ENCODE measurements at regions of chr12 and their contacts with region 1.

Region 1: GRCh38 chr12:103924761-103925641 is 5.2 kb upstream of the HSP90B1 start:
- DNase-seq: peak; percentile 80
- H3K4me3 Mint-ChIP-seq: peak overlapping the region; percentile 78
- H3K27ac Mint-ChIP-seq: peak overlapping the region; percentile 94
- H3K4me1 Mint-ChIP-seq: peaks cover 39% of the 10 kb centered on the region
- H3K27me3 Mint-ChIP-seq: no peaks in the 10 kb centered on the region

Region 2: DNA sequence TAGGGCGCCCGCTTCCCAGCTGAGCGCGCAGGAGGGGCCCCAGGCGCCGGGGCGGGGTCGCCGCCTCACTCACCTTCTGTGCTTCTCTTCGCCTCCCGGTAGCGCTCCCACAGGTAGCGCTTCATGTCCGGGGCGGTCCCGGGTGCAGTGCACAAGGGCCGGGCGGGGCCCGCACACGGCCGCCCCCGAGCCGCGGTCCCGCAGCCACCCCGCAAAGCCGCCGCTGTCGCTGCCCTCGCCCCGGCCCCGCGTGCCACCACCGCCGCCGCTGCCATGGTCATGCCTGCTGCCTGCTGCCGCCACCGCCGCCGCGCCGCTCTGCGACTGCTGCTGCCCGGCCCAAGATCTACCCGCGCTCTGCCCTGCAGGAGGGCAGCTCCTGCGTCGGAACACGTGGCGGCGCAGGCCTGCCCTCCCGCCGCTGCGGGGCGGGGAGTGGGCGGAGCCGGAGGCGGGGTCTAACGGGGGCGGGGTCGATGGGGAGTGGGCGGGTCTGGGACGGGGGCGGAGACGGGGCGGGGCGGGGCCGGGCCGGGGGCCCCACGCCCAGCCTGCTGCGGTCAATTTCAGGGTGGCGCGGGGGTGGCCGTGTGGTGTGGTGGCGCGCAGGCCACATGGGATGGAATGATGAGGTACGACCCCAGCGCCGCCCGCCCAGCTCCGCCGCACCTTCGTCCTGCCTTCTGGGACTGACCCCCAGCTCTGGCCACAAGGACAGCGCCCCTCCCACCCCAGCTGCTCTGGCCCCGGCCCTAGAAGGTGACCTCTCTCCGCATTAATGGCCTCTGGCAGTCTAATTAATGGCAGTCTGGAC is 83.9 kb before region 1 on chr12 and contains the start of gene NT5DC3:
- CTCF ChIA-PET with region 1: no interaction called
- POLR2A ChIA-PET with region 1: interaction called, 3 read pairs
- intact Hi-C with region 1: loop called (anchors 1 kb)
- DNase-seq: peak; percentile 89
- H3K4me3 Mint-ChIP-seq: peak within 1 kb of the TSS; percentile 76
- H3K27ac Mint-ChIP-seq: peak within 1 kb of the TSS; percentile 31
- H3K4me1 Mint-ChIP-seq: peaks cover 13% of the 10 kb centered on the region
- H3K27me3 Mint-ChIP-seq: no peaks in the 10 kb centered on the region
- total RNA-seq, gene NT5DC3: 6.8 to 7.5 TPM

Region 3: DNA sequence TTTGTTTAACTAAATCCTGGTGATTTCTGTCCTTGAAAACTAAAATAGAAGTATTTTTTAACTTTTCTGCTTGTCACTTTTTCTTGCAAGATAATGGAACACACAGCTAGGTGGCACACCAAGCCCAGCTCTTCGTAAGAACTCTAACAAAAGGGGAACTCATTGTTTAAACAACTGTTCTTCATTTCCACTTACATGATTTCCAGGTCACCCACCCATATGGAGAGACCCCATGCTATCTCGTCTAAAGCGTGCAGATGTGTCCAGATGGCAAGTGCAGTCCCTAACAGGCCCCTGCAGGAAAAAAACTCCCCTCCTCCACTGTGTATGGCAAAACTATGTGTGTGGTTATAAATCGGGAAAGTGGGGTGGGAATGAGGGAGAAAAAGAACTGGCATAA is 40.7 kb before region 1 on chr12:
- CTCF ChIA-PET with region 1: no interaction called
- POLR2A ChIA-PET with region 1: interaction called, 6 read pairs
- intact Hi-C with region 1: loop called (anchors 1 kb)
- DNase-seq: peak; percentile 57
- H3K4me3 Mint-ChIP-seq: no peak overlapping the region
- H3K27ac Mint-ChIP-seq: no peak overlapping the region
- H3K4me1 Mint-ChIP-seq: peaks cover 16% of the 10 kb centered on the region
- H3K27me3 Mint-ChIP-seq: no peaks in the 10 kb centered on the region

Region 4: DNA sequence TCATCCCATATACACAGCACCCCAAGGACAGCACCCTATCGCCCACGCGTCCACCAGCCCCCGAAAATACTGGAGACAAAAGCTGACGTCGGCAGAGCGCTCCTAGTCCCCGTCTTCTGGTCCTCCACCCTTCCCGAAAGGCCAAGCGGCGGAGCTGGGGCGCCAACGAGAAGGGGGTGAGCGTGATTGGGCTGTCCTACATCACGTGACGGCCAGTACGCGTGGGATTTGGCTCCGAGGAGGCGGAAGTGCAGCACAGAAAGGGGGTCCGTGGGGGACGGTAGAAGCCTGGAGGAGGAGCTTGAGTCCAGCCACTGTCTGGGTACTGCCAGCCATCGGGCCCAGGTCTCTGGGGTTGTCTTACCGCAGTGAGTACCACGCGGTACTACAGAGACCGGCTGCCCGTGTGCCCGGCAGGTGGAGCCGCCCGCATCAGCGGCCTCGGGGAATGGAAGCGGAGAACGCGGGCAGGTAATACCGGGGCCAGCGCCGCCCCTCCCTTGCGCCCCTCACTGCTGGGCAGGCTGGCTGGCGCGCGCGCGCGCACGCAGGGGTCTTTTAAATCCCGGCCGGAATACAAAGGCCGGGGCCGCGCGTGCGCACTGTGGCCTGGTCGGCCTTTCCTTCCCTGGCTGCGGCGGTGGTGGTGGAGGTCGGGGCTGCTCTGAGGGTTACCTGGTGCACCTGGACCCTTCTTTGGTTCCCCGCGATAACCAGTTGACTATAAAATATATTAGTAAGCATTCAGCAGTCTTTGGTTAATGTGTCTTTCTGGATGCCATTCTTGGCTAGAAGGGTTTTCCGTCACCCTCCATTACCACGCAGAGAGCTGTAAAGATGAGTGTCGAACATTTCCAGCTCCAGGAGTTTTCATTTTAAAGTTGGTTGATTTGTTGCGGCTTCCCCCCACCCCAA is 40.8 kb after region 1 on chr12 and contains the start of gene TDG:
- CTCF ChIA-PET with region 1: interaction called, 3 read pairs
- POLR2A ChIA-PET with region 1: interaction called, 49 read pairs
- intact Hi-C with region 1: loop called (anchors 1 kb)
- DNase-seq: peak; percentile 99
- H3K4me3 Mint-ChIP-seq: peak within 1 kb of the TSS; percentile 96
- H3K27ac Mint-ChIP-seq: peak within 1 kb of the TSS; percentile 96
- H3K4me1 Mint-ChIP-seq: peaks cover 53% of the 10 kb centered on the region
- H3K27me3 Mint-ChIP-seq: no peaks in the 10 kb centered on the region
- total RNA-seq, gene TDG: 29.1 to 29.7 TPM

Region 5: GRCh38 chr12:104083769-104084475 is 158.9 kb after region 1 on chr12:
- CTCF ChIA-PET with region 1: interaction called, 4 read pairs
- POLR2A ChIA-PET with region 1: interaction called, 3 read pairs
- intact Hi-C with region 1: loop called (anchors 1 kb)
- DNase-seq: peak; percentile 78
- H3K4me3 Mint-ChIP-seq: no peak overlapping the region
- H3K27ac Mint-ChIP-seq: no peak overlapping the region
- H3K4me1 Mint-ChIP-seq: peaks cover 17% of the 10 kb centered on the region
- H3K27me3 Mint-ChIP-seq: no peaks in the 10 kb centered on the region

Region 6: GRCh38 chr12:104094284-104094683 is 169.3 kb after region 1 on chr12:
- CTCF ChIA-PET with region 1: no interaction called
- POLR2A ChIA-PET with region 1: no interaction called
- intact Hi-C with region 1: no loop called
- DNase-seq: no peak
- H3K4me3 Mint-ChIP-seq: no peak overlapping the region
- H3K27ac Mint-ChIP-seq: no peak overlapping the region
- H3K4me1 Mint-ChIP-seq: peaks cover 16% of the 10 kb centered on the region
- H3K27me3 Mint-ChIP-seq: no peaks in the 10 kb centered on the region